Activated CD4-positive, alpha-beta T cell treated with anti-CD3 and anti-CD28 coated beads, Interleukin-2, amount 10 ng/mL, durations not matched to agents 24 days and 14 days (primary cell): ENCODE measurements at regions of chr19 and their contacts with region 1.

Region 1: DNA sequence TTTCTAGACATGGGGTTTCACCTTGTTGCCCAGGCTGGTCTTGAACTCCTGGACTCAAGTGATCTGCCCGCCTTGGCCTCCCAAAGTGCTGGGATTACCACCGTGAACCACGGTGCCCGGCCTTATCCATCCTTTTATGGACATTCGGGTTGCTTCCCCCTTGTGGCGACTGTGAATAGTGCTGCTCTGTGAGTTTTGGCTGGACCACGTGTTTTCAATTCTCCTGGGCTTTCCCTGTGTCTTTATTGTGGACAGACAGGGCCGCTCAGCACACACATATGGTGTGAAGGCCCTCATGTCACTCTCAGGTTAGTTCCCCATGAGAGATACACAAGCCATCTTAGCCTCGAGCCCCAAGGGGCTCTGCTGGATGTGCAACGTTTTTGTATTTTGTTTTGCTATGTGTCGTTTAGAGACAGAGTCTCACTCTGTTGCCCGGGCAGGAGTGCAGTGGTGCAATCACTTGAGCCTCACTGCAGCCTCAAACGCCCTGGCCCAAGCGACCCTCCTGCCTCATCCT is 40.5 kb downstream of the MAU2 start:
- DNase-seq: peak; percentile 91
- H3K4me3 Mint-ChIP-seq: no peak overlapping the region
- H3K27ac Mint-ChIP-seq: peak overlapping the region; percentile 78
- H3K4me1 Mint-ChIP-seq: peaks cover 24% of the 10 kb centered on the region
- H3K27me3 Mint-ChIP-seq: no peaks in the 10 kb centered on the region

Region 2: DNA sequence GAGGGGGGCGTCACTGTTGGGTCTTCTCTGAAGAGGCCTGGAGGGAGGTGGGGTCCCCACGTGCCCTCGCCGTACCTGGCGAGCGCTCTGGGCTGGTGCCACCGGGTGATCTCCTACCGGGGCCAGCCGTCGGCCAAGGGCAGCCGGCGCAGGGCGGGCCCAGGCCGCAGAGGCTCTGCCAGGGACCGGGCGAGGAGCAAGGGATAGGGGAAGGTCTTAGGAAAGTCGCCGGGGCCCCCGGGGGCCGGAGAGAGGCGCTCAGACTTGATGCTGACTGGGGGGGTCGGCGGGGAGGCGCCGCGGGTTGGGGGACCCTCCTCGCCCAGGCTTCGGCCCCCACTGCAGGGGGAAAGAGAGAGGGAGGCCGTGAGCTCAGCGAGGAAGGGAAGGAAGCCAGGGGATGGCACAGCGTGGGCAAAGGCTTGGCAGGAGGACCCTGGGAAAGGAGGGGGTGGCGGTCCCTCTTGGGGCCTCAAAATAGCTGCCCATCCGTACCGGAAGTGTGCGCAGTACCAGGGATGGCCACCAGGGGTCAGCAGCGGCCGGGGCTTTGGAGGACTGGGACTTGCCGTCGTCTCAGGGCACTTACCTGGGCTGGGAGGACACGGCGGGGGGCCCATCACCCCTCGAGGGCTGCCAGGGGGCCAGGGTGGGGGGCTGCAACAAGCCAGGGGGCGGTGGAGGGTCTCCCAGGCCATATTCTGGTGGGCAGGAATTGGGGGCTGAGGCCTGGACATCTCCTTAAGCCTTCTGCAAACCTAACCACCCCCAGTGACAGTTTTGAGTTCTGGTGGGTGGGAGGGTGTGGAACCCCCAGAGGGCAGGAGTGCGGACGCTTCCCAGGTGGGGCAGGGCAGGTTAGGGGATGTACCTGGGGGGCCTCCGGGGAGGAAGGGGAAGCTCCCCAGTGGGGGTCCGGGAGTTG is 215.2 kb before region 1 on chr19:
- intact Hi-C with region 1: loop called (anchors 5 kb)
- DNase-seq: peak; percentile 97
- H3K4me3 Mint-ChIP-seq: no peak overlapping the region
- H3K27ac Mint-ChIP-seq: no peak overlapping the region
- H3K4me1 Mint-ChIP-seq: peaks cover 2% of the 10 kb centered on the region
- H3K27me3 Mint-ChIP-seq: no peaks in the 10 kb centered on the region

Region 3: GRCh38 chr19:19385108-19385899 is 24.2 kb after region 1 on chr19:
- intact Hi-C with region 1: loop called (anchors 2 kb)
- DNase-seq: peak; percentile 100
- H3K4me3 Mint-ChIP-seq: peak overlapping the region; percentile 85
- H3K27ac Mint-ChIP-seq: peak overlapping the region; percentile 89
- H3K4me1 Mint-ChIP-seq: peaks cover 36% of the 10 kb centered on the region
- H3K27me3 Mint-ChIP-seq: no peaks in the 10 kb centered on the region

Region 4: DNA sequence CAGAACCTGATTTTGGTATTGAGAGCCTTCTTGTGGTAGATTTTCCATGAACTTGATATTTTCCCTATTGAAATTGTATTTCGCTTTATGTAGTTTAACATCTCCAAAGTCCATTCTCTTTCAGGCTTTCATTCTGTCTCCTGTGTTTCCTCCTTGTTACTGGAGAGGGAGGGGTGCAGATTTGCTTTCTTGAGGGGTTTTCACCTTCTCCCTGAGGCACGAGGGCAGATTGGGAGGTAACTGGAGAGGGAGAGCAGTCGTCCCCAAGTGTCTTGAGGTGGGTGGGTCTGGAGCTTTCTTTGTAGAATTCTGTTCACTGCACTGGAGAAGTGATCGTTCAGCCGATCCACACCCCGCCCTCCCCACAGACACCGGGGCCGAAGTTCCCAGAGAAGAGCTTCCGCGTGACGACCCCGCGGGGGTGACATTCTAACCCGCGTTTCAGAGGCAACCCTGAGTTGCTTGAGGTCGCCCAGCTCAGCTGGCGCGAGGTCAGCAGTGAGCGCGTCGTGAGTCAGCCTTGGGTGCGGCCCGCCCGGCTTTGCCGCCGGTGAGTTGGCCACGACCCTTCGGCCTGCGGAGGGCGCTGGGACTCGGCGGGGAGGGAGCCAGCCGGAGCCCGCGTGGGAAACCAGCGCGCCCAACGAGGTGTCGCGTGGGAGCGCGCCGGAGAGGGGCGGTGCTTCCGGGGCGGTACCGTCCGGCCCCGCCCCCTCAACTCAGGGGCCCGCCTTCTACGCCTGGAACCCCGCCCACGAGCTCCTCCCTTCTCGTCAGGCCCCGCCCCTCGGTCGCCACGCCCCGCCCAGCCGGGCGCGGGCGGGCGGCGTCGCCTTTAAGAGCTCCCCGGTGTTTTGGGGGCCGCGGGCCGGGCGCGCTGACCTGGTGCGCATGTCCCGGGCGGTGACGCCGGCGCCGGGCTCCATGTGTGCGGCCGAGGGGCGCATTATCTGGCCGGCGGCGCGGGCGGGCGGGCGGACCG is 44.0 kb after region 1 on chr19 and contains the start of gene GATAD2A:
- intact Hi-C with region 1: loop called (anchors 2 kb)
- DNase-seq: peak; percentile 97
- H3K4me3 Mint-ChIP-seq: peak within 1 kb of the TSS; percentile 90
- H3K27ac Mint-ChIP-seq: peak within 1 kb of the TSS; percentile 93
- H3K4me1 Mint-ChIP-seq: peaks cover 55% of the 10 kb centered on the region
- H3K27me3 Mint-ChIP-seq: no peaks in the 10 kb centered on the region
- total RNA-seq, gene GATAD2A: 134 and 135 TPM in 2 replicates